ENCODE measurements at regions of chr13 and their contacts with region 1.

Region 1: GRCh38 chr13:101211261-101211660 is 205.0 kb downstream of the NALCN start:
- DNase-seq: no peak
- H3K4me3 Mint-ChIP-seq: no peak overlapping the region
- H3K27ac Mint-ChIP-seq: no peak overlapping the region
- H3K4me1 Mint-ChIP-seq: no peaks in the 10 kb centered on the region
- H3K27me3 Mint-ChIP-seq: peaks cover 7% of the 10 kb centered on the region

Region 2: GRCh38 chr13:100473087-100473486 is 738.2 kb before region 1 on chr13:
- CTCF ChIA-PET with region 1: no interaction called
- intact Hi-C with region 1: no loop called
- DNase-seq: no peak
- H3K4me3 Mint-ChIP-seq: no peak overlapping the region
- H3K27ac Mint-ChIP-seq: no peak overlapping the region
- H3K4me1 Mint-ChIP-seq: peaks cover 8% of the 10 kb centered on the region
- H3K27me3 Mint-ChIP-seq: no peaks in the 10 kb centered on the region

Region 3: DNA sequence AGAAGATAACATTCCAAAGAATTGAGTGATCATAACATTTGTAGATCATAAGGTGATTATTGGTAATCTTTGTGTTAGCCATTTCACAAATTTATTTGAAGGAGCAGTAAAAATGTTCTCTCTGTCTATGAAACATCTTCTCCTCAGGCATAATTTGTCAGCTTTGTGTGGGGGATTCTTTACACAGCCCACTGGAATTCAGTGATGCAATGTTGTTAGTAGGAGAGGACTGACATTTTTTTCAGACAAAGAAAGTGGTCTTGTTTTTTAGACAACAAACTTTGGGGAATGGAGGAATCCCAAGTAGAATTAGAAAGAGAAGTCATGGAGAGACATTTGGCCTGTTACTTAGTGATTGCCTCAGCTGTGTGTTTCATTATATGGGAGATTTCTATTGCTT is 341.5 kb after region 1 on chr13:
- CTCF ChIA-PET with region 1: no interaction called
- intact Hi-C with region 1: no loop called
- DNase-seq: no peak
- H3K4me3 Mint-ChIP-seq: no peak overlapping the region
- H3K27ac Mint-ChIP-seq: no peak overlapping the region
- H3K4me1 Mint-ChIP-seq: no peaks in the 10 kb centered on the region
- H3K27me3 Mint-ChIP-seq: peaks cover 11% of the 10 kb centered on the region

Region 4: DNA sequence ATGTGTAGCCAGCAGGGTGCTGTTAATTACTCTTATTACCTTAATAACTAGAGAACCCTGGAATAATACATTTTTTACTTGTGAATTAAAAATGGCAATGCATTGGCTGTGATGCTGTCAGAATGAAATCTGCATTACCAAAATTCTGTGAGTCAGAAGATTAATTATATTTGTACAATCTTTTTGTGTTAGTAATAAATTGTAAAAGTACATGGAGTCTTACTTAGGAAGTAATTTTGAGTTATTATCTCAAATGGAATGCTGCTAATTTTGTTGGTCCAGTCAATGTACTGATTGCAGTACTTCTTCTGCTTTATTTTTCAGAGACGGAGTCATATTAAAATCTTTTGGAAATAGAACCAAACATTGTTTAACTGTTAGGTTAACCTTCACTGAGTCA is 2007.0 kb after region 1 on chr13:
- CTCF ChIA-PET with region 1: no interaction called
- intact Hi-C with region 1: loop called (anchors 10 kb)
- DNase-seq: no peak
- H3K4me3 Mint-ChIP-seq: no peak overlapping the region
- H3K27ac Mint-ChIP-seq: no peak overlapping the region
- H3K4me1 Mint-ChIP-seq: no peaks in the 10 kb centered on the region
- H3K27me3 Mint-ChIP-seq: no peaks in the 10 kb centered on the region